ENCODE measurements at regions of chr5 and their contacts with region 1.

Region 1: GRCh38 chr5:99032234-99033013 is 103.6 kb upstream of the CHD1 start:
- DNase-seq: peak; percentile 72 to 74 (median 72)
- H3K4me3 ChIP-seq: peak overlapping the region in 6 of 7 experiments; percentile 30 to 82 (median 69)
- H3K27ac ChIP-seq: peak overlapping the region in 1 of 2 experiments; percentile 17
- H3K4me1 ChIP-seq: peaks cover 18 to 38% (median 30%) of the 10 kb centered on the region in 4 experiments
- H3K27me3 ChIP-seq: no peaks in the 10 kb centered on the region

Region 2: GRCh38 chr5:98905857-98906690 is 126.3 kb before region 1 on chr5:
- CTCF ChIA-PET with region 1: interaction called, 27 read pairs
- POLR2A ChIA-PET with region 1: interaction called, 4 read pairs
- DNase-seq: peak; percentile 61 to 81 (median 77)
- H3K4me3 ChIP-seq: no peak overlapping the region
- H3K27ac ChIP-seq: no peak overlapping the region
- H3K4me1 ChIP-seq: no peaks in the 10 kb centered on the region
- H3K27me3 ChIP-seq: no peaks in the 10 kb centered on the region

Region 3: DNA sequence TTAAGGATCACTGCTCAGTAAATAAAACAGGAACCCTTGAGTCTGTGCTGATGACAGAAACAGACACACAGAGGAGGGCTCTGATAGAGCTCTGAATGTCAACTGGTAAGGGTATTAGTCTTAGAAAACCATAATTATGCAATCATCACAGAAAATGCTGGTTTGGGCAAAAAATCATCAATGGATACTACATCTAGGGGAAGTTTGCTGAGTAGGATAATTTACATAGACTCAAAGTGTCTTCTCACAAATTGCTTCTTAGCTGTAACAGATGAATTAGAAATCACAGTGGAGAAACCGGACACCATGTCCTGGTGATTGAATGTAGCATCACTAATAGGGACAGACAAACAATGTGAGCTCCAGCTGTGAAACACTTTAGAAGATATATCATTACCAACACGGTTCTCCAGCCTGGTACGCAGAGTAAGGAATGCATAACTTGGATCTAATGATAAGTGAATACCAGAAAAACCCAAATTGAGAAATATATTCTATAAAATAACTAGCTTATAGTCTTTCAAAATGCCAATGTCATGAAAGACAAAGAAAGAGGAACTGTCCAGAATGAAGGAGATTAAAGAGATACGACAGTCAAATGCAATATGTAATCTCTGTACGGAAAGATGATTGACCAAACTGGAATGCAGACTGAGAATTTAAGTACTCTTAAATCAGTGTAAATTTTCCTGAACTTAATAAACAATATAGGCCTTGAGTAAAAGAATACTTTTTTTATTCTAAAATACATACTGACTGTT is 121.0 kb before region 1 on chr5:
- CTCF ChIA-PET with region 1: interaction called, 23 read pairs
- POLR2A ChIA-PET with region 1: no interaction called
- DNase-seq: peak in 2 of 3 donors; percentile 35 to 50
- H3K4me3 ChIP-seq: no peak overlapping the region
- H3K27ac ChIP-seq: no peak overlapping the region
- H3K4me1 ChIP-seq: no peaks in the 10 kb centered on the region
- H3K27me3 ChIP-seq: no peaks in the 10 kb centered on the region

Region 4: DNA sequence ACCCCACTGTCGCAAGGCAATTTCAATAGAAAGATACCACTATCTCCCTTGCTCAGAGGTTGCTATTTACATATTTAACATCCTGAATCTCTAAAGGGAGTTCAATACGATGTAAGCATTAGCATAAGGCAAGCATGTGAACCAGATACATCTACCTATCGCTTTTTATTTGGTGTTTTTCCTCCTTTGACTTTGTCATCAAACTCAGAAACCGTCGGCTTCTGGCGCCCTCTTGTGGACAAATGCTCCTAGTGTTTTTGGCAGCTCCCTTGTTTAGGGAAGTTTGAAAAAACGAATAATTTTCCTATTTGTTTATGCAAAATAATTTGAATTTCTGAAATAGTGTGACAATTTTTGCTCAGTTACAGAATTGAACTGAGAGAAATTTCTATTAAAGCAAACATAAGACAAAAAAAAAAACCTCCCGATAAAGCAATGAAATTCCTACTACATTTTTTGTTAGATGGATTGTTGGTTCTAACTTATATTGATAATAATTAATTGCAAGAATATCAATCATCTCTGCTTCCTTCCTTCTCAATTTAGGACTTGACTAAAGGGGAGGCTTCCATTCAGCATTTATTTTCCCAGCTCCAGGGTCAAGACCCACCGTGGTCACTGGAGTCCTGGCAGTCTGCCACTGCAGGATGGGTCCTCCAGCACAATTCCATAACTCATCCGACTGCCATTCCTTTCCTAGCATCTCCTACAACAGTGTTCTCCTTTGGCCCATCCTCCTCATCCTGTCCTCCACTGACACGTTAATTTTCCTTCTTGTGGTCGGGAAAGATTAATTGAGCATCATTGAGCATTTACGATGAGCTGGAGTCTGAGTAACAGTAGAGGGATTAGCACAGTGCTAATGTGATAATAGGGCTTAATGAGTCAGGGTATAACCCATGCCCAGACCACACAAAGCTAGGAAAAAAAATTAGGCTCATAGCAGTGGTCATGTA is 28.2 kb after region 1 on chr5:
- CTCF ChIA-PET with region 1: interaction called, 13 read pairs
- POLR2A ChIA-PET with region 1: no interaction called
- DNase-seq: peak; percentile 80 to 88 (median 82)
- H3K4me3 ChIP-seq: no peak overlapping the region
- H3K27ac ChIP-seq: no peak overlapping the region
- H3K4me1 ChIP-seq: peaks cover 0 to 3% (median 0%) of the 10 kb centered on the region in 4 experiments
- H3K27me3 ChIP-seq: peaks cover 0 to 1% (median 0%) of the 10 kb centered on the region in 5 experiments

Region 5: DNA sequence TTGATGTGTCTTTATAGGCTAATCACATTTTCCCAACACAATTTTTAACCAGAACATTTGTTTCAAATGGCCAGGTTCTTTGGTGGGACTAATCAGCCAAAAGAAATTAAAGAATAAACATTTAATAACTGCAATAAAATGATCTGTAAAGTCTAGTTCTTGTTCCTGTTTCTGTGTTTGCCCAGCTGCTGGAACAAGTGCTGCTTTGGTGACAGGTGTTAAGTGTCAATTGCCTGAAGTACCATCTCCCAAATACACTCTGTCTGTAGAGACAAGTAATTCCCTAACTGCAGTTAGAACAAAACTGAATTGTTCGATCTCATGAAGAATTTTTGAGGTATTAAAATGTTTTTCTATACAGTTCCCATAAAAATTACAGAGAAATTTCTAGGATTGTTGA is 298.6 kb after region 1 on chr5:
- CTCF ChIA-PET with region 1: no interaction called
- POLR2A ChIA-PET with region 1: no interaction called
- DNase-seq: no peak
- H3K4me3 ChIP-seq: no peak overlapping the region
- H3K27ac ChIP-seq: no peak overlapping the region
- H3K4me1 ChIP-seq: no peaks in the 10 kb centered on the region
- H3K27me3 ChIP-seq: no peaks in the 10 kb centered on the region